ENCODE measurements at regions of chr1 and their contacts with region 1.

Region 1: GRCh38 chr1:52502789-52503188 is 50.1 kb downstream of the TUT4 start:
- DNase-seq: no peak
- ATAC-seq: no peak
- H3K4me3 ChIP-seq: no peak overlapping the region
- H3K27ac ChIP-seq: no peak overlapping the region
- H3K4me1 ChIP-seq: no peaks in the 10 kb centered on the region
- H3K27me3 ChIP-seq: no peaks in the 10 kb centered on the region
- CTCF ChIP-seq: no peak
- POLR2A ChIP-seq: no peak

Region 2: DNA sequence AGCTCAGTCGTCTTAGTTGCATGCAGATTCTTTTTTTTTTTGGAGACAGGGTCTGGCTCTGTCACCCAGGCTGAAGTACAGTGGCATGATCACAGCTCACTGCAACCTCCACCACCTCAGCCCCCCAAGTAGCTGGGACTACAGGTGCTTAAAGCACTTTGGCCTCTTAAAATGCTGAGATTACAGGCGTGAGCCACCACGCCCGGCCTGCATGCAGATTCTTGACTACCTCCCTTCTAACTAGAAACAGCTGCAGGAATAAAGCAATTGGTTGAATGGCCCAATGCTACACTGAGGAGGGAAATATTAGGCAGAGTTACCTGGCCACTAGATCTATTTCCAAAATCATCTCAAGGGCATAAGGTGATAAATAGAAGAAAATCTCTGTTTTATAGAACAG is 1142.9 kb before region 1 on chr1:
- intact Hi-C with region 1: loop called in 1 of 10 experiments (anchors 10 kb)
- DNase-seq: no peak
- ATAC-seq: no peak
- H3K4me3 ChIP-seq: no peak overlapping the region
- H3K27ac ChIP-seq: no peak overlapping the region
- H3K4me1 ChIP-seq: no peaks in the 10 kb centered on the region
- H3K27me3 ChIP-seq: no peaks in the 10 kb centered on the region
- CTCF ChIP-seq: no peak
- POLR2A ChIP-seq: no peak

Region 3: GRCh38 chr1:52424231-52424636 is 78.6 kb before region 1 on chr1:
- intact Hi-C with region 1: no loop called
- DNase-seq: no peak
- ATAC-seq: peak in 3 of 4 donors; percentile 39 to 49 (median 45)
- H3K4me3 ChIP-seq: no peak overlapping the region
- H3K27ac ChIP-seq: peak overlapping the region in 4 of 12 donors; percentile 0 to 42 (median 28)
- H3K4me1 ChIP-seq: peaks cover 0 to 20% (median 7%) of the 10 kb centered on the region in 12 donors
- H3K27me3 ChIP-seq: no peaks in the 10 kb centered on the region
- CTCF ChIP-seq: no peak
- POLR2A ChIP-seq: no peak

Region 4: DNA sequence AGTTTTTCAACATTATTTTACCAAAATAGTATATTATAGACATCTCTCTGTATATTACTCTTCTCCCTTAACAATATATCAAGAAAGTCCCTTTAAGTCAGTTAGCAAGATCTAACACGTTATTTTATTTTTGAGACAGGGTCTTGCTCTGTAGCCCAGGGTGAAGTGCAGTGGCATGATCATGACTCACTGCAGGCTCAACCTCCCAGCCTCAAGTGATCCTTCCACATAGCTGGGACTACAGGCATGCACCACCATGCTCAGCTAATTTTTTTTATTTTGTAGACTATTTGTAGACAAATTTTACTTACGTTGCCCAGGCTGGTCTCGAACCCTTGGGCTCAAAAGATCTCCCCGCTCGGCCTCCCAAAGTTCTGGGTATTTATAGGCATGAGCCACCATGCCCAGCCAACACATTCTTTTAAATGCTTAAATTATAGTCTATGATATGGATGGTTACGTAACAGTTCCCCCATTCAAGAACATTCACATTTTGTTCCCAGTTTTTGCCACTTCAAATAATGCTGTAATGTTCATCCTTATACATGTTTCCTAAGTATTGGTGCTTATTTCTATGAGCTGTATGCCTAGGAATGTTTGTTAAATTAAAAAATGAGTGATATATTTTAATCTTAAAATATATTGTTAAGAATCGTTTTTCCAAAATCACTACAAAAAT is 20.3 kb before region 1 on chr1:
- intact Hi-C with region 1: no loop called
- DNase-seq: no peak
- ATAC-seq: no peak
- H3K4me3 ChIP-seq: no peak overlapping the region
- H3K27ac ChIP-seq: no peak overlapping the region
- H3K4me1 ChIP-seq: no peaks in the 10 kb centered on the region
- H3K27me3 ChIP-seq: no peaks in the 10 kb centered on the region
- CTCF ChIP-seq: no peak
- POLR2A ChIP-seq: no peak

Region 5: DNA sequence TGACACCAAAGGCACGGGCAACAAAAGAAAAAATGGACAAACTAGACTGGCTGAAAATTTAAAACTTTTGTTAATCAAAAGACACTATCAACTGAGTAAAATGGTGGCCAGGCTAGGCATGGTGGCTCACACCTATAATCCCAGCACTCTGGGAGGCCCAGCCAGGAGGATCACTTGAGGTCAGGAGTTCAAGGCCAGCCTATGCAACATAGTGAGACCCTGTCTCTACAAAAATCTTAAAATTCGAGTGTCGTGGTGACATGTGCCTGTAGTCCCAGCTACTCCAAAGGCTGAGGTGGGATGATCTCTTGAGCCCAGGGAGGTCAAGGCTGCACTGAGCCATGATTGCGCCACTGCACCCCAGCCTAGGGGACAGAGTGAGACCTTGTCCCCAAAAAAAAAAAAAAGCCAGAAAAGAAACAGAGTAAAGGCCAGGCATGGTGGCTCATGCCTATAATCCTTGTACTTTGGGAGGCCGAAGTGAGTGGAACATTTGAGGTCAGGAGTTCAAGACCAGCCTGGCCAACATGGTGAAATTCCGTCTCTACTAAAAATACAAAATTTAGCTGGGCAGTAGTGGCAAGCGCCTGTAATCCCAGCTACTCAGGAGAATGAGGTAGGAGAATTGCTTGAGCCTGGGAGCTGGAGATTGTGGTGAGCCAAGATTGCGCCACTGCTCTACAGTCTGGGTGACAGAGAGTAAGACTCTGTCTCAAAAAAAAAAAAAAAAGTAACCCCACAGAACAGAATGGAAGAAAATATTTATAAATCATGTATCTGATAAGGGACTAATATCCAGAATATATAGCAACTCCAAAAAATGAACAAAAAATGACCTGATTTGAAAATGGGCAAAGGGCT is 42.1 kb after region 1 on chr1:
- intact Hi-C with region 1: loop called in 1 of 10 experiments (anchors 5 kb)
- DNase-seq: no peak
- ATAC-seq: no peak
- H3K4me3 ChIP-seq: no peak overlapping the region
- H3K27ac ChIP-seq: no peak overlapping the region
- H3K4me1 ChIP-seq: peaks cover 0 to 3% (median 0%) of the 10 kb centered on the region in 12 donors
- H3K27me3 ChIP-seq: no peaks in the 10 kb centered on the region
- CTCF ChIP-seq: no peak
- POLR2A ChIP-seq: no peak

Measured in heart left ventricle (tissue), 16 donors.